Activated T-helper 1 cell treated with anti-CD3 and anti-CD28 coated beads, Interleukin-12 subunit alpha, Interleukin-12 subunit beta, Interleukin-2, Interleukin-4 antibody, amounts not matched to agents 30 ng/mL and 10 ng/mL and 1 ng/mL, durations not matched to agents 14 hours and 24 hours and 36 hours (primary cell): ENCODE measurements at regions of chr1 and their contacts with region 1.

Region 1: GRCh38 chr1:204431310-204432165 is 19.9 kb upstream of the PPP1R15B start:
- DNase-seq: peak; percentile 58
- H3K4me3 Mint-ChIP-seq: no peak overlapping the region
- H3K27ac Mint-ChIP-seq: no peak overlapping the region
- H3K4me1 Mint-ChIP-seq: no peaks in the 10 kb centered on the region
- H3K27me3 Mint-ChIP-seq: no peaks in the 10 kb centered on the region

Region 2: GRCh38 chr1:204198151-204198994 is 233.2 kb before region 1 on chr1:
- intact Hi-C with region 1: no loop called
- DNase-seq: no peak
- H3K4me3 Mint-ChIP-seq: no peak overlapping the region
- H3K27ac Mint-ChIP-seq: no peak overlapping the region
- H3K4me1 Mint-ChIP-seq: no peaks in the 10 kb centered on the region
- H3K27me3 Mint-ChIP-seq: peaks cover 5% of the 10 kb centered on the region

Region 3: DNA sequence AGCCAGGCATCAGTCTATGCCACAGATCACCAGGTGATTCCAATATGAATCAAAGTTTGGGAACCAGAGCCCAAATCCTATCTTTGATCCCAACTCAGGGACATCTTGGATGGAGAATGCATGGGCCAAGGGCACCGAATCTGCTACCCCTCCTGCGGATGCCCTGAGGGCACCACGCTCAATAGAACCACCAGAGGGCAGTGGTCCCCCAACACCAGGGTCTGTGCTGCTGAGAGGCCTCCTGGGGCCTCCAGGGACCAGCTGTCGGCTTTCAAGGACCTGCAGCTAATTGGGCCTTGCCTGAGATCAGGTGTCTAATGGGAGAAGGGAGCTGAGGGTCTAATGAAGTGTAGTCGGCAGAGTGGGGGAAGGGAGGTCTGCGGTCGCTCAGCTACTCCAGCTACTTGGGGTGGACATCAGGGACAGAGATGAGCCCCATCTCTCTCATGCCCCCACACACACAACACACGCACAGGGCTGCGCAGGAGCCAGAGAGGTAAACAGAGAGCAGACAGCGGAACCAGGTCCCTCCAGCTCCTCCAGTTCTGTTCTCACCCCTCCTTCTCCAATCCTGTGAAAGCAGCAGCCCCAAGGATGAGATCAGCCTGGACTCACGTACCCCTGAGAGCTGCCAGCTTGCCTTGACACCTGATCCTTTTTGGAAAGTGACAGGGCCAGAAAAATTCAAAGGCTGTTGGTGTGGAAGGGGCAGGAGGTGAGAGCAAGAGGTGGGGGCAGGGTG is 15.0 kb after region 1 on chr1:
- intact Hi-C with region 1: loop called (anchors 1 kb)
- DNase-seq: peak; percentile 66
- H3K4me3 Mint-ChIP-seq: no peak overlapping the region
- H3K27ac Mint-ChIP-seq: peak overlapping the region; percentile 49
- H3K4me1 Mint-ChIP-seq: peaks cover 48% of the 10 kb centered on the region
- H3K27me3 Mint-ChIP-seq: no peaks in the 10 kb centered on the region